ENCODE measurements at regions of chr19 and their contacts with region 1.

Region 1: GRCh38 chr19:3035542-3036118 is 6.5 kb upstream of the TLE2 start:
- DNase-seq: peak; percentile 92 to 98 (median 97)
- H3K4me3 ChIP-seq: peak overlapping the region; percentile 39 to 95 (median 66)
- H3K27ac ChIP-seq: peak overlapping the region; percentile 67 to 99 (median 95)
- H3K27me3 ChIP-seq: no peaks in the 10 kb centered on the region
- CTCF ChIP-seq: peak in 8 of 56 donors; percentile 7 to 35 (median 16)

Region 2: GRCh38 chr19:2977001-2977685 is 58.5 kb before region 1 on chr19 and contains the start of gene TLE6:
- intact Hi-C with region 1: loop called (anchors 1 to 5 kb)
- DNase-seq: peak; percentile 92 to 97 (median 96)
- H3K4me3 ChIP-seq: peak within 1 kb of the TSS; percentile 36 to 74 (median 59)
- H3K27ac ChIP-seq: peak within 1 kb of the TSS in 3 of 59 donors; percentile 17 to 32 (median 21)
- H3K27me3 ChIP-seq: no peaks in the 10 kb centered on the region
- CTCF ChIP-seq: peak in 3 of 56 donors; percentile 6 to 8 (median 8)
- total RNA-seq, gene TLE6: 0.23 to 3.4 (median 1.1) TPM in 114 of 120 experiments, not detected in the others

Region 3: DNA sequence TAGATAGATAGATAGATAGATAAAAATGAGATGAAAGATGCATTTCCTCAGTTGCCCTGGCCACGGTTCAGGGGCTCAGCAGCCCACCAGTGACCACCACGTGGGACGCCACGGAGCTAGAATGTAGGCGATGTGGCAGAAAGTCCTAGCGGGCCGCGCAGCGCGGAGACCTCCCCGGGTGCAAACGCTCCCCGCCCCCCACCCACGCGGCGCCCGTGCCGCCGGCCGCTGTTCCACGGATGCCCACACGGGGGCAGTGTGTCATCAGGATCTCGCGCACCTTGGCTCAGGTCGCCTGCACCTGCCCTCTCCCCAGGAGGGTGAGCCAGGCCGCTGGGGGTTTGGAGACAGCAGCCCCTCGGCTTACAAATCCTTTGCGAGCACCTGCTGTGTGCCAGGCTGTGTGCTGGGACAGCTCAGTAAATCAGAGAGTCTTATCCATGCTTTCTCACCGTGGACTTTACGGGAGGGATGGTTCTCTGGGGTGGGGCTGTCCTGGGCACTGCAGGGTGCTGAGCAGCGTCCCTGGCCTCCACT is 40.3 kb after region 1 on chr19:
- intact Hi-C with region 1: loop called in 1 of 2 experiments (anchors 5 kb)
- DNase-seq: peak in 6 of 10 donors; percentile 26 to 81 (median 52)
- H3K4me3 ChIP-seq: peak overlapping the region in 46 of 59 donors; percentile 0 to 50 (median 32)
- H3K27ac ChIP-seq: peak overlapping the region in 2 of 59 donors; percentile 4 to 39
- H3K27me3 ChIP-seq: no peaks in the 10 kb centered on the region
- CTCF ChIP-seq: peak; percentile 65 to 97 (median 90)

Region 4: DNA sequence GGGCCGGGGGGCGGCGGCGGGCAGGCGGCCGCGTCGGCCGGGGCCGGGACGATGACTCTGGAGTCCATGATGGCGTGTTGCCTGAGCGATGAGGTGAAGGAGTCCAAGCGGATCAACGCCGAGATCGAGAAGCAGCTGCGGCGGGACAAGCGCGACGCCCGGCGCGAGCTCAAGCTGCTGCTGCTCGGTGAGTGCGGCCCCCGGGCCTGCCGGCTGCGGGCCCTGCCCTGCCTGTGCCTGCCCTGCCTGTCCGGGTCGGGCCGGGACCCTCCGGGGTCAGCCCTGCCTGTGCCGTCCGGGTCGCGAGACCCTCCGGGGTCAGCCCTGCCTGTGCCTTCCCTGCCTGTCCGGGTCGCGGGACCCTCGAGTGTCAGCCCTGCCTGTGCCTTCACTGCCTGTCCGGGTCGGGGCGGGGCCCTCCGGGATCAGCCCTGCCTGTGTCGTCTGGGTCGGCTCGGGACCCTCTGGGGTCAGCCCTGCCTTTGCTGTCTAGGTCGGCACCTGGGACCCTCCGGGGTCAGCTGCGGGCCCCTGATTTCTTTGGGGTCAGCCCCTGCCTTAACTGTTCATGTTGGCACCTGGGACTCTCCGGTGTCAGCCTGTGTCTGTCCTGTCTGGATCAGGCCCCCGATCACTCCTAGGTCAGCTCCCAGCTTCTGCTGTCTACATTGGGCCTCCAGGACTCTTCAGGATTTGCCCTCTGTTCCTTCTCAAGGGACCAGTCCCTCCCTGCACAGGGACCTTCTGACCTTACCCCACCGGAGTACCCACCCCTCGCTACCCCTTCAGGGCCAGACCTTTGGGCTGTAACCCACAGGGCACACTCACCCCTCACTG is 59.2 kb after region 1 on chr19:
- intact Hi-C with region 1: loop called in 1 of 2 experiments (anchors 2 kb)
- DNase-seq: peak in 1 of 10 donors; percentile 53
- H3K4me3 ChIP-seq: peak overlapping the region; percentile 68 to 99 (median 92)
- H3K27ac ChIP-seq: peak overlapping the region in 12 of 59 donors; percentile 4 to 90 (median 74)
- H3K27me3 ChIP-seq: no peaks in the 10 kb centered on the region
- CTCF ChIP-seq: no peak

Region 5: GRCh38 chr19:3471954-3472655 is 436.5 kb after region 1 on chr19:
- intact Hi-C with region 1: no loop called
- DNase-seq: peak in 3 of 10 donors; percentile 23 to 57 (median 40)
- H3K4me3 ChIP-seq: peak overlapping the region in 3 of 59 donors; percentile 7 to 40 (median 17)
- H3K27ac ChIP-seq: no peak overlapping the region
- H3K27me3 ChIP-seq: no peaks in the 10 kb centered on the region
- CTCF ChIP-seq: peak; percentile 55 to 96 (median 88)